ENCODE measurements at regions of chr9 and their contacts with region 1.

Region 1: GRCh38 chr9:12813960-12814876 is 39.4 kb downstream of the LURAP1L start:
- DNase-seq: peak; percentile 30
- ATAC-seq: peak; percentile 81 to 94

Region 2: GRCh38 chr9:12775679-12776512 is 38.3 kb before region 1 on chr9:
- intact Hi-C with region 1: loop called in 1 of 2 experiments (anchors 5 kb)
- DNase-seq: peak; percentile 43
- ATAC-seq: peak; percentile 53 to 70

Region 3: DNA sequence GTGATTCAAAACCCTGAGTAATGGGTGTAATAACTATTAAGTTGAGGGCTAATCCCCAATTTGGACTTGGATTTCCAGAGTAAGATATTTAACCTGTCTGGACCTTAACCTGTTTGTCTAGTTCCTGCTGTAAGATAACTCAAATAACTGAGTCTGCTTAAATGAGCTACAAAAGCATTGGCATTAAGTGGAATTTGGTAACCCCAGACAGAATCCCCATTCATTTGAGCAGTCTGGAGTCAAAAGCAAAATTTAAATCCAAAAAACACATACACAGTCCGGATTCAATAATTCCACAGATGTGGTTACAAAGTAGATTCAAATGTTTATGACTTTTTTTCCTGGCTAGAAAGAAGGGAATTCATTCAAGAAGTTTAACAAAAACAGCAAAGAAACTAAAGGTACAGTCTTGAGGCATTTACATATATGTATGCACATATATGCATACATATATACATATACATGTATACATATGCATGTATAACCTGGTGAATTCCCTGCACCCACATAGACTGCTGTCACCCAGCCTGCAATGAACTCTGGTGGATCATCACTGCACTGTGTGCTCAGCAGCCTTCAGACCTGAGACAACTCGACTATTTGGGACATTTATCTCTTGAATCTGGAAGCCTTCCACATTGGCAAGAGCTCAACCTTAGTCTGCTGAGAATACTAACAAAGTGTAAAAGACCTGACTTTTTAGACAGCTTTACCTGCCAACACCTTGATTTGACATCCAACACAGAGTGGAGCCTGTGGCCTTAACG is 166.1 kb after region 1 on chr9:
- intact Hi-C with region 1: no loop called
- DNase-seq: no peak
- ATAC-seq: no peak

Measured in left cardiac atrium (tissue), 4 donors.